ENCODE measurements at regions of chr19 and their contacts with region 1.

Region 1: GRCh38 chr19:47600246-47601179 is 8.4 kb upstream of the BICRA start:
- DNase-seq: peak; percentile 100
- ATAC-seq: peak; percentile 98
- H3K4me3 Mint-ChIP-seq: peak overlapping the region; percentile 79
- H3K27ac Mint-ChIP-seq: peak overlapping the region; percentile 89
- H3K4me1 Mint-ChIP-seq: peaks cover 31% of the 10 kb centered on the region
- H3K27me3 Mint-ChIP-seq: no peaks in the 10 kb centered on the region

Region 2: DNA sequence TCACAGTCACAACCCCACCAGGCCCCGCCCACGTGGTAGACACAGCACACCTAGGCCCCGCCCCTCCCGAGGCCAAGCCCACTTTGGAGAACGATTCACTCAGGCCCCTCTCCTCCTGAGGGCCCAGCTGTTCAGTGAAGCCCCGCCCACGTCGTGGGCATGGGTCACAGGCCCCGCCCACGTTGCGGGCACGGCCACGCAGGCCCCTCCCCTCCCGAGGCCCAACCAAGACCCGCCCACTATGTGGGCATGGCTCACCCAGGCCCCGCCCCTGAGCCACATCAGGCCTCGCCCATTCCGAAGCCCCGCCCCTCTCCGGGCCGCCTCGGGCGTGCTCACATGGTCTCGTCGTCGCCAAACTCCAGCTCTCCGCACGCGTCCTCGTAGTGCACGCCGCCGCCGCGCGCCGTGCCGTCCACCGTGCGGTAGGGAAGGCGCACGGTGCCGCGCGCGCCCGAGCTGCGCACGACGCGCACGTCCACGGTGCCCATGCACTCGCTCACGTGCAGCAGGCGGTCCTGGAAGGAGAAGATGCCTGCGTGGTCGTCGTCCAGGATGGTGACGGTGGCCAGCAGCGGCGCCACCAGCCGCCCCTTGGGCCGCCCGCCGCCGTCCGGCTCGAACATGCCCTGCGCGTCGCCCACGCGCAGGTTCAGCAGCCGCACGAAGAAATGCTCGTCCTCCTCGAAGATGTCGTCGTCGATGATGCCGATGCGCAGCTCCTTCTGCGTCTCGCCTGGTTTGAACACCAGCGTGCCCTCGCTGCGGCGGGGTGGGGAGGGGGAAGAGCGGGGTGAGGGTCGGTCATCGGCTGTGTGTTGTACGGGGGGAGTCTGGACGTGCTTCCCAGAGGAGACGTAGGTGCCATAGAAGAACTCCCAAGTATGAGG is 152.8 kb before region 1 on chr19:
- CTCF ChIA-PET with region 1: no interaction called
- POLR2A ChIA-PET with region 1: no interaction called
- intact Hi-C with region 1: loop called in 1 of 2 experiments (anchors 1 kb)
- DNase-seq: peak; percentile 90
- ATAC-seq: peak; percentile 85
- H3K4me3 Mint-ChIP-seq: peak overlapping the region; percentile 1
- H3K27ac Mint-ChIP-seq: no peak overlapping the region
- H3K4me1 Mint-ChIP-seq: peaks cover 44% of the 10 kb centered on the region
- H3K27me3 Mint-ChIP-seq: peaks cover 56% of the 10 kb centered on the region

Region 3: DNA sequence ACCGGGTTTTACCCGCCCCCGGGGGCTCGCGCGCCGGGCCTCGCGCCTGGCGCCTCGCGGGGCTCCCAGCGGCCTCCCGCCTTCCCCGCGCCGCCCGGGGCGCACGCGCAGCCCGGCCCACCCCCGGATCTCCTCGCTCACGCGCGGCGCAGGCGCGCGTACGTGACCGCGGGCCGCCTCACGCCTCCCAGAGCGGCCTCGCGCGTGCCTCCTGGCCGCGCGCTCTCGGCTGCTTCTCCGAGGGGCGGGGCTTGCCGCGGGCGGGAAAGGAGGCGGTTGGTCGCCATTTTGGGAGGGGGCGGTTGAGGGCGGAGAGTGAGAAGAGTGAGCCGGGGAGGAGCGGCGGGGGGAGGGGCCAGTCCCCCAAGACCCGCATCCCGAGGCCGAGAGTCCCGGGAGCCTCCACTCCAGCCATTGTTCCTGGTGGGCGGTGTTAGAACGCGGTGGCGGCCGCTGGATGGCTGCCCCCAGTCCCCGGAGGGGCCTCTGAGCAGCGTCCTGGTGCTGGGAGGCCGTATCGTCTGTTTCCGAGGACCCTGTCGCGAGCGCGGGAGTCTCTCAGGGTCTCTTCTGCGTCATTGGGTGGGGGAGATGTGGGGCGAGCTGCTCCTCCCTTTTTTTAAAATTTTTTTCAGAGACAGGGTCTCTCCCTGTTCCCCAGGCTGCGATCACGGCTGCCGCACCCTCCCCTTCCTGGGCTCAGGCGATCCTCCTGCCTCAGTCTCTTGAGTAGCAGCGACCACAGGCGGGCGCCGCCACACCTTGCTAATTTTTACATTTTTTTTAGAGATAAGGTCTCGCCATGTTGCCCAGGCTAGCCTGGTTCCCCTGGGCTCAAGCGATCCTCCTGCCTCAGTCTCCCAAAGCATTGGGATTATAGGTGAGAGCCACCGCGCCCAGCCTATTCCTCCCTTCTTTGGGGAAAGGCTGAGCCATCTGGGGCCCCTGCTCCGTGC is 27.2 kb before region 1 on chr19 and contains the start of gene ZNF541:
- CTCF ChIA-PET with region 1: no interaction called
- POLR2A ChIA-PET with region 1: no interaction called
- intact Hi-C with region 1: loop called in 1 of 2 experiments (anchors 1 kb)
- DNase-seq: peak; percentile 85
- ATAC-seq: peak; percentile 79
- H3K4me3 Mint-ChIP-seq: peak within 1 kb of the TSS; percentile 32
- H3K27ac Mint-ChIP-seq: peak within 1 kb of the TSS; percentile 2
- H3K4me1 Mint-ChIP-seq: peaks cover 28% of the 10 kb centered on the region
- H3K27me3 Mint-ChIP-seq: peaks cover 4% of the 10 kb centered on the region
- total RNA-seq, gene ZNF541: 0.11 to 0.14 TPM